ENCODE measurements at regions of chr14 and their contacts with region 1.

Region 1: DNA sequence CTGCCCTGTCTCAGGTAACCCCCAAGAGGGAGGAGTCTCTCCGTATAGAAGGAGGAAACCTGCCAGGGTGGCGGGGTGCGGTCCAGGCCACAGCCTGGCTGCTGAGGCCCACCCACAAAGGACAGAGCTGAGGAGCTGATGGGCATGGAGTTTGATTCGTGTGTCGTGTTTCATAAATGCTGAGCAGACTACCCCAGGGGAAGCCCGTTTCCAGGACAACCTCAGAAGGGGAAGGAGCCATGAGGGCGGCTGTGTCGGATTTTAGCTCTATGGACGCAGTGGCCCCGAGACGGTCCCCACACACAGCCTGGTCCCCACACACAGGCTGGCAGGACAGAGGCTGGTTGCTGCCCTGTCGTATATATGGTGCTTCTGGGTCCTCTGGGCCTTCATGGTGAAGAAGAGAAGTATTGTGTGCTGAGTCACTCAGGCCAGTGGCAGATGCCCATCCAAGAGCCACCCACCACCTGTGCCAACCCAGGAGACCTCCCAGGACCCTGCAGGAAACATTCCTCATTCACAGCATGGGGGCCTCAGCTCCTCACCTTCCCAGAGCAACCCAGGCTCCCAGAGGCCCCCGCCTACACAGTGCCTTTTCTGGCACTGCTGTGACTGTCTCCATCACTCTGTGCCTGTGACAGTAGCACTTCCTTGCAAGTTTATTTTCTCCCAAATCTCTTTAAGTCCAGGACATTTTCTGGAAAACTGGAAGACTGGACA is 63.1 kb upstream of the RIN3 start:
- DNase-seq: no peak
- ATAC-seq: no peak
- H3K4me3 ChIP-seq: no peak overlapping the region
- H3K27ac ChIP-seq: peak overlapping the region in 2 of 12 donors; percentile 50
- H3K4me1 ChIP-seq: peaks cover 0 to 18% (median 8%) of the 10 kb centered on the region in 12 donors
- H3K27me3 ChIP-seq: no peaks in the 10 kb centered on the region
- CTCF ChIP-seq: no peak
- POLR2A ChIP-seq: no peak

Region 2: DNA sequence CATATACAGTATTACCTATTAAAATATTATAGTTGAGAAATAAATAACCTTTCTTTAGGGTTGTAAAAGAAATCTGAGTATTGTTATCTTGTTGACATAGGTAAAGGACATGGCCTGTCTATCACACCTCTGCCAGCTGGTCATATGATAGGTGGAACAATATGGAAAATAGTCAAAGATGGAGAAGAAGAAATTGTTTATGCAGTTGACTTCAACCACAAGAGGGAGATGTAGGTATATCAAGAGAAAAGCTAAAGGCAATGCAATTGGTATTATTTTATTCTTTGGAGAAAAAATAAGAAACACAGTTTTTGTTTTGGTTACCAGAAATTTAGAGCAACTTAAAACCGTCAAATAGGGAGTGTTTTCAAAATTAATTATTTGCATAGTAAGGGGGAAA is 315.2 kb before region 1 on chr14:
- intact Hi-C with region 1: loop called in 7 of 10 experiments (anchors 5 to 10 kb)
- DNase-seq: no peak
- ATAC-seq: no peak
- H3K4me3 ChIP-seq: no peak overlapping the region
- H3K27ac ChIP-seq: no peak overlapping the region
- H3K4me1 ChIP-seq: peaks cover 0 to 3% (median 0%) of the 10 kb centered on the region in 12 donors
- H3K27me3 ChIP-seq: no peaks in the 10 kb centered on the region
- CTCF ChIP-seq: peak; percentile 26 to 60 (median 46)
- POLR2A ChIP-seq: no peak

Region 3: DNA sequence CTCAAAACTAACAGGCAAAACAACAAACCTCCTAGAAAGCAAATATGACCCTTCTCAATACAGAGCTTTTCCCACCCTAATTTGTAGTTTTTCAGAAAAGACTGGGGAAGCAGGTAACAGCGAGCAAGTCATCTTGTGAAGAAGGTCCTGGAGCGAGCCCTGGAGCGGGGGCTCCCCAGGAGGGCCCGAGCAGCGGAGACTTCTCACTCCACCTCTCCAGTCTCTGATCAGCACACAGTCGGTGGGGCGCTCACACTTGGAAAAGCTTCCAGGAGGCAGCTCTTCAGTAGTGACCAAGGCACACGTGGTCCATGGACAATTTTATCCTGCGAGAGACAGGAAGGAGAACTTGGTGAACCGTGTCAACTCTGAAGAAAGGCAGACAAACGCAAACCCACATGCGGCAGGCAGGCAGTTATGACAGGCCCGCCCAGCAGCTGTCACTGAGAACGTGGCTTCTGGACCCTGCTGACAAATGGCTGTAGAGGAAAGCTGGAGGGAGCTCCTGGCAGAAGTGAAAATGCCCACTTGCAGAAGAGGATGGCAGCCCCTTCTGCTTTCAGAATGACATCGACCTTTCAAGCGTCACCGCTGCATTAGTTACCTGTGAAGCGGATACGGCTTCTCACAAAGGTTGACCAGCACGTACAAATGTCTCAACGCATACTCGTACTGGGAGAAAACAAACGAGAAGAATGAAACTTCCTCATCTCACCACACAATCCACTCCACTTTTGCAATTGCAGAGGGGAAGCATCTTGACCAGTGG is 253.7 kb after region 1 on chr14:
- intact Hi-C with region 1: no loop called
- DNase-seq: peak in 2 of 5 donors; percentile 42 to 60
- ATAC-seq: peak; percentile 23 to 70 (median 51)
- H3K4me3 ChIP-seq: no peak overlapping the region
- H3K27ac ChIP-seq: peak overlapping the region in 2 of 12 donors; percentile 14 to 79
- H3K4me1 ChIP-seq: peaks cover 0 to 30% (median 0%) of the 10 kb centered on the region in 12 donors
- H3K27me3 ChIP-seq: no peaks in the 10 kb centered on the region
- CTCF ChIP-seq: no peak
- POLR2A ChIP-seq: no peak

Measured in heart left ventricle (tissue), 16 donors.